BJ (cell line): ENCODE measurements at regions of chrX and their contacts with region 1.

Region 1: DNA sequence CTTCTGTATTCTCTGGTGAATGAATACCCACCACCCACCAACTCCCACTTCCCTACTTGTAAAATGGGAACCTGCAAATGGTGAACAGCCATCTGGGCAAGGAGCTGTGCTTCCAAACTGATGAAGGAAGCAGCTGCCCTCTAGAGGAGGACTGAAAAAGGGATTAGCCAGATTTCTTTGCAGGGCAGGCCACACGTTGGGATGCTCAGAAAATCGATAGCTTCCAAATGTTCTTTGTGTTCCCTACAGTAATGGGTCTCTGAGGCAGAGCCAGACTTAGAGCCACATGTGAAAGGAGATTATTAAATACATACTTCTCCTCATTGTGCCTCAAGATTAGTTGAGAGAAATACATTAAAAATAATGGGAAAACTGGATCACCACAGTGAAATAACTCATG is 39.3 kb upstream of the LPAR4 start:
- DNase-seq: no peak
- H3K4me3 ChIP-seq: no peak overlapping the region
- H3K27me3 ChIP-seq: no peaks in the 10 kb centered on the region
- CTCF ChIP-seq: peak; percentile 69

Region 2: GRCh38 chrX:78555401-78555980 is 152.8 kb before region 1 on chrX:
- CTCF ChIA-PET with region 1: interaction called, 19 read pairs
- POLR2A ChIA-PET with region 1: no interaction called
- DNase-seq: no peak
- H3K4me3 ChIP-seq: no peak overlapping the region
- H3K27me3 ChIP-seq: no peaks in the 10 kb centered on the region
- CTCF ChIP-seq: 0 out of 2 replicates have a peak, but pooled peaks have one; percentile 24

Region 3: GRCh38 chrX:78595901-78596502 is 112.3 kb before region 1 on chrX:
- CTCF ChIA-PET with region 1: interaction called, 22 read pairs
- POLR2A ChIA-PET with region 1: no interaction called
- DNase-seq: no peak
- H3K4me3 ChIP-seq: no peak overlapping the region
- H3K27me3 ChIP-seq: no peaks in the 10 kb centered on the region
- CTCF ChIP-seq: peak; percentile 27; the same call in 1 of the 2 replicates

Region 4: GRCh38 chrX:78653118-78653822 is 55.0 kb before region 1 on chrX:
- CTCF ChIA-PET with region 1: no interaction called
- POLR2A ChIA-PET with region 1: no interaction called
- DNase-seq: peak; percentile 54
- H3K4me3 ChIP-seq: no peak overlapping the region
- H3K27me3 ChIP-seq: no peaks in the 10 kb centered on the region
- CTCF ChIP-seq: no peak